ENCODE measurements at regions of chr19 and their contacts with region 1.

Region 1: GRCh38 chr19:34364830-34365462 is at the start of gene GPI:
- DNase-seq: peak; percentile 70
- H3K4me3 Mint-ChIP-seq: peak within 1 kb of the TSS; percentile 91
- H3K27ac Mint-ChIP-seq: peak within 1 kb of the TSS; percentile 45
- H3K4me1 Mint-ChIP-seq: peaks cover 29% of the 10 kb centered on the region
- H3K27me3 Mint-ChIP-seq: no peaks in the 10 kb centered on the region
- CTCF ChIP-seq: no peak
- total RNA-seq, gene GPI: 353 and 375 TPM in 2 replicates

Region 2: DNA sequence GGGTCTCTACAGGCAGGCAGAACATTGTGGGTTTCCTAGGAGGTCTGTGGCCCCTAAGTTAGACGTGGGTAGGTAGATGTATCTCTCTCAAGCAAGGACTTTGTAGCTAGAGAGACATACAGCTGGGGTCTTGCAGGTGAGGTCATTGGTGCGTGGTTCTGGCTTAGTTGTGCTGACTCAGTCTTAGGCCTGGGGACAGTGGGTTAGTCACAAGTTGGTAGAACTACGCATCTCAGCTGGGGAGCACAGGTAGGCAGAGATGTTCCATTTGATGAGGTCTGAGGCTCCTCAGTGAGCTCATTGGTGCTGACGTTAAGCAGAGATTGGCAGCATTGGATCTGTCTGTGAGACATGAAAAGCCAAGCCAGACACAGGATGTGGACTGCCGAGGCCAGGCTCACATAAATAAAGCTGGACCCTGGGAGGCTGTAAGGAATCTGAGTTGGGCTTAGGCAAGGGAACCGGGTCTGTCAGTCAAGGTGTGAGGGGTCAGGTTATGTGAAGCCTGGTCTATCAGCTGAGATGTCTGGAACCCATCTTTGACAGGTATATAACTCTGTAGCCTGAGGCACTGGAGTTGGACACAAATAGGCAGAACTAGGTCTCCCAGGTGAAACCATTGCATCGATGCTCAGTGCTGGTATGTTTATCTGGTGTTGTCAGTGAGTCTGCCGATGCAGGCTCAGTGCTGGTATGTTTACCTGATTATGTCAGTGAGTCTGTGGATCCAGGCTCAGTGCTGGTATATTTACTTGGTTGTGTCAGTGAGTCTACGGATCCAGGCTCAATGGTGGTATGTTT is 21.9 kb after region 1 on chr19:
- CTCF ChIA-PET with region 1: no interaction called
- intact Hi-C with region 1: no loop called
- DNase-seq: no peak
- H3K4me3 Mint-ChIP-seq: no peak overlapping the region
- H3K27ac Mint-ChIP-seq: no peak overlapping the region
- H3K4me1 Mint-ChIP-seq: no peaks in the 10 kb centered on the region
- H3K27me3 Mint-ChIP-seq: no peaks in the 10 kb centered on the region
- CTCF ChIP-seq: no peak

Region 3: GRCh38 chr19:34430738-34431625 is 66.0 kb after region 1 on chr19:
- CTCF ChIA-PET with region 1: interaction called, 3 read pairs
- intact Hi-C with region 1: loop called (anchors 2 kb)
- DNase-seq: peak; percentile 51
- H3K4me3 Mint-ChIP-seq: peak overlapping the region; percentile 92
- H3K27ac Mint-ChIP-seq: peak overlapping the region; percentile 29
- H3K4me1 Mint-ChIP-seq: peaks cover 11% of the 10 kb centered on the region
- H3K27me3 Mint-ChIP-seq: no peaks in the 10 kb centered on the region
- CTCF ChIP-seq: peak; percentile 77